GM12878 (cell line): ENCODE measurements at regions of chr22 and their contacts with region 1.

Region 1: GRCh38 chr22:21641789-21642583 is at the start of gene SDF2L1:
- DNase-seq: peak; percentile 88
- ATAC-seq: peak; percentile 98
- H3K4me3 ChIP-seq: peak within 1 kb of the TSS; percentile 97
- H3K27ac ChIP-seq: peak within 1 kb of the TSS; percentile 88
- H3K4me1 ChIP-seq: peaks cover 15% of the 10 kb centered on the region
- H3K27me3 ChIP-seq: no peaks in the 10 kb centered on the region
- CTCF ChIP-seq: no peak
- EP300 ChIP-seq: no peak
- POLR2A ChIP-seq: peak; percentile 95
- RAD21 ChIP-seq: no peak
- polyA plus RNA-seq, gene SDF2L1: 3.0 to 17.8 TPM

Region 2: GRCh38 chr22:21567456-21568346 is 74.3 kb before region 1 on chr22 and contains the start of gene UBE2L3:
- CTCF ChIA-PET with region 1: interaction called, 13 read pairs
- POLR2A ChIA-PET with region 1: interaction called, 3 read pairs
- RAD21 ChIA-PET with region 1: interaction called, 12 read pairs
- SMC1A ChIA-PET with region 1: interaction called, 5 read pairs
- in situ Hi-C with region 1: no loop called
- intact Hi-C with region 1: no loop called
- DNase-seq: no peak
- ATAC-seq: peak; percentile 83
- H3K4me3 ChIP-seq: peak within 1 kb of the TSS; percentile 96
- H3K27ac ChIP-seq: peak within 1 kb of the TSS; percentile 90
- H3K4me1 ChIP-seq: peaks cover 9% of the 10 kb centered on the region
- H3K27me3 ChIP-seq: no peaks in the 10 kb centered on the region
- CTCF ChIP-seq: no peak
- EP300 ChIP-seq: no peak
- POLR2A ChIP-seq: peak; percentile 93
- RAD21 ChIP-seq: no peak
- polyA plus RNA-seq, gene UBE2L3: 149 to 168 TPM

Region 3: GRCh38 chr22:21587803-21588611 is 54.0 kb before region 1 on chr22:
- CTCF ChIA-PET with region 1: interaction called, 9 read pairs
- POLR2A ChIA-PET with region 1: interaction called, 5 read pairs
- RAD21 ChIA-PET with region 1: interaction called, 15 read pairs
- SMC1A ChIA-PET with region 1: no interaction called
- in situ Hi-C with region 1: no loop called
- intact Hi-C with region 1: loop called (anchors 10 kb)
- DNase-seq: peak; percentile 78
- ATAC-seq: peak; percentile 98
- H3K4me3 ChIP-seq: peak overlapping the region; percentile 41; the same call in 1 of the 2 replicates
- H3K27ac ChIP-seq: peak overlapping the region; percentile 49
- H3K4me1 ChIP-seq: peaks cover 26% of the 10 kb centered on the region
- H3K27me3 ChIP-seq: no peaks in the 10 kb centered on the region
- CTCF ChIP-seq: no peak
- EP300 ChIP-seq: peak in 1 of 2 experiments; percentile 80; a peak in 2 of 4 replicates
- POLR2A ChIP-seq: no peak
- RAD21 ChIP-seq: no peak

Region 4: GRCh38 chr22:21652010-21652546 is 10.1 kb after region 1 on chr22:
- CTCF ChIA-PET with region 1: interaction called, 25 read pairs
- POLR2A ChIA-PET with region 1: interaction called, 4 read pairs
- RAD21 ChIA-PET with region 1: interaction called, 5 read pairs
- SMC1A ChIA-PET with region 1: interaction called, 8 read pairs
- in situ Hi-C with region 1: no loop called
- intact Hi-C with region 1: no loop called
- DNase-seq: peak; percentile 51
- ATAC-seq: peak; percentile 99
- H3K4me3 ChIP-seq: peak overlapping the region; percentile 73
- H3K27ac ChIP-seq: peak overlapping the region; percentile 89
- H3K4me1 ChIP-seq: peaks cover 3% of the 10 kb centered on the region
- H3K27me3 ChIP-seq: no peaks in the 10 kb centered on the region
- CTCF ChIP-seq: no peak
- EP300 ChIP-seq: no peak
- POLR2A ChIP-seq: peak; percentile 95
- RAD21 ChIP-seq: no peak

Region 5: DNA sequence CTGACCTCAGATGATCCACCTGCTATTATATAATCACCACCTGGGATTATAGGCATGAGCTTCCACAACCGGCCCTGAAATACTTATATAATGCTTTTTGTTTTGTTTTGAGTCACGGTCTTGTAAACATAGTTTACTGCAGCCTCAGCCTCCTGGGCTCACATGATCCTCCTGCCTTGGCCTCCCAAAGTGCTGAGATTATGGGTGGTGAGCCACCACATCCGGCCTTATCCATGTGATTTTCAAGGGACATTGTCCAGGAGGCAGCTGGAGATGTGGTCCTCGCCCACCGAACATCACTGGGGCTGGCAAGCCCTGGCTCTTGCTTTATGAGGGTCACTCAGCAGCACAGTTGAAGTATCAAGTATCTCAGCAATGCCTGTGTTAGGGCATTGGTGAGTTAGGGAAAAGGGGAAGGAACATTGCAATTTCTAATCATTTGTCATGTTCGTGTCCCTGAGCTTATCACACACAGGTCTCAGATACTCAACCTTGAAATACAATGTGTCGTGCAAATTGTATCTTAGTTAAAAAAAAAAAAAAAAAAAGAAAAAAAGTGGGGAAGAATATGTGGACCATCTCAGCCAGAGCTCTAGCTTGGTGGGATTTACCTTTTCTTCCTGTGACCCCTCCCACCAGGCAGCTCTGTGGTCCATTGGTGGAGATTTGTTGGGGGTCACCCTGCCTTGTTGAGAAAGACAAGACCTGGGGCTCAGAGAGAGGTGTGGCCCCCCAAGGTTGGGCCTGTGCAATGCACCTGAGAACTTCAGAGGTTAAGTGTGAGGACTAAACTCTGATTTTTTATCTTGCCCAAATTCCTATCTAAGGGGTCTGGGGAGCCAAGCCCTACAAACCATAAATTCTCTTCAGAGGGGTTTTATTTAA is 265.9 kb after region 1 on chr22:
- CTCF ChIA-PET with region 1: no interaction called
- POLR2A ChIA-PET with region 1: no interaction called
- RAD21 ChIA-PET with region 1: no interaction called
- SMC1A ChIA-PET with region 1: no interaction called
- in situ Hi-C with region 1: no loop called
- intact Hi-C with region 1: no loop called
- DNase-seq: no peak
- ATAC-seq: no peak
- H3K4me3 ChIP-seq: no peak overlapping the region
- H3K27ac ChIP-seq: no peak overlapping the region
- H3K4me1 ChIP-seq: no peaks in the 10 kb centered on the region
- H3K27me3 ChIP-seq: no peaks in the 10 kb centered on the region; a peak in 1 of 4 replicates
- CTCF ChIP-seq: no peak
- EP300 ChIP-seq: no peak
- POLR2A ChIP-seq: no peak
- RAD21 ChIP-seq: no peak